Psoas muscle (tissue), 8 donors: ENCODE measurements at regions of chr15 and their contacts with region 1.

Region 1: DNA sequence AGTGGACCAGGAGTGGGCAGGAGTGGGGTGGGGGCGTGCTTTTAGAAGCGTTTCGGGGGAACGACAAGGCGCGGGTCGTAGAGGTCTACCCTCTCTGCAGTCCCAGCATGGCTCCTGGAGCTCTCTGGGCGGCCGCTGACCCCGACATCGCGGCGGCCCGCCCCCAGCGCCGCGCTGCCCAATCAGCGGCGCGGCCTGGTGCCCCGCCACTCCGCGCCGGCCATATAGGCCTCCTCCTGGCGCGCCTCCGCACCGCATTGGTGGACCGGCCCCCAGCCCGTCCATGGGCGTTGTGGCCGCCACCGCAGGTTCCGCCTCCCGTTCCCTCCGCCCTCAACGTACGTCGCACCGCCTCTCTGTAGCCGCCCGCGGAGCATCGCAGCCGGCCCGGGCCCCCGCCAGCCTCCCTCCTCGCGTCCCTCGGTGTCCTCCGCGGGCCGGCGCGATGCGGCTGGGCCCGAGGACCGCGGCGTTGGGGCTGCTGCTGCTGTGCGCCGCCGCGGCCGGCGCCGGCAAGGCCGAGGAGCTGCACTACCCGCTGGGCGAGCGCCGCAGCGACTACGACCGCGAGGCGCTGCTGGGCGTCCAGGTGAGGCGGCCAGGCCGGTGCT is at the start of gene RCN2:
- DNase-seq: peak; percentile 96 to 97
- ATAC-seq: peak; percentile 100
- H3K4me3 ChIP-seq: peak within 1 kb of the TSS; percentile 77
- H3K27ac ChIP-seq: peak within 1 kb of the TSS; percentile 81
- H3K4me1 ChIP-seq: peaks cover 12% of the 10 kb centered on the region
- H3K27me3 ChIP-seq: no peaks in the 10 kb centered on the region
- CTCF ChIP-seq: peak; percentile 4
- total RNA-seq, gene RCN2: 16.6 to 28.8 (median 24.7) TPM

Region 2: DNA sequence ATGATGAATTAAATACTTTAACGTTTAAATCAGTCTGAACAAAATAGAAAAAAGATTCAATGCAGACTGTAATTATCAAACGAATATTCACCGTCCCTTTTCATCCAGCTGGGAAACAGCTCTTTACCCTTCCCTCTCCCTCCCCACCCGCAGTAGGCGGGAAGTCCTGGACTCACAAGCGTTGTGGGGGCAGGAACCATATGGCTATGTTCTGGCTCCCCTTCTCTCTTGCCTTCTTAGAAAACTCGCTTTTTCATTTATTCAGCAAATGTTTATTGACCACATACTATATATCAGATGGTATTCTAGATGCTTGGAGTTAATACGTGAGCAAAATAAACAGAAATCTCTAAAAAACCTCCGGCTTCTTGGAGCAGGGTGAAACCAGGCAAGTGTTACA is 25.6 kb before region 1 on chr15:
- intact Hi-C with region 1: loop called in 1 of 2 experiments (anchors 2 kb)
- DNase-seq: no peak
- ATAC-seq: no peak
- H3K4me3 ChIP-seq: peak overlapping the region; percentile 80
- H3K27ac ChIP-seq: peak overlapping the region; percentile 86
- H3K4me1 ChIP-seq: peaks cover 23% of the 10 kb centered on the region
- H3K27me3 ChIP-seq: no peaks in the 10 kb centered on the region
- CTCF ChIP-seq: no peak

Region 3: DNA sequence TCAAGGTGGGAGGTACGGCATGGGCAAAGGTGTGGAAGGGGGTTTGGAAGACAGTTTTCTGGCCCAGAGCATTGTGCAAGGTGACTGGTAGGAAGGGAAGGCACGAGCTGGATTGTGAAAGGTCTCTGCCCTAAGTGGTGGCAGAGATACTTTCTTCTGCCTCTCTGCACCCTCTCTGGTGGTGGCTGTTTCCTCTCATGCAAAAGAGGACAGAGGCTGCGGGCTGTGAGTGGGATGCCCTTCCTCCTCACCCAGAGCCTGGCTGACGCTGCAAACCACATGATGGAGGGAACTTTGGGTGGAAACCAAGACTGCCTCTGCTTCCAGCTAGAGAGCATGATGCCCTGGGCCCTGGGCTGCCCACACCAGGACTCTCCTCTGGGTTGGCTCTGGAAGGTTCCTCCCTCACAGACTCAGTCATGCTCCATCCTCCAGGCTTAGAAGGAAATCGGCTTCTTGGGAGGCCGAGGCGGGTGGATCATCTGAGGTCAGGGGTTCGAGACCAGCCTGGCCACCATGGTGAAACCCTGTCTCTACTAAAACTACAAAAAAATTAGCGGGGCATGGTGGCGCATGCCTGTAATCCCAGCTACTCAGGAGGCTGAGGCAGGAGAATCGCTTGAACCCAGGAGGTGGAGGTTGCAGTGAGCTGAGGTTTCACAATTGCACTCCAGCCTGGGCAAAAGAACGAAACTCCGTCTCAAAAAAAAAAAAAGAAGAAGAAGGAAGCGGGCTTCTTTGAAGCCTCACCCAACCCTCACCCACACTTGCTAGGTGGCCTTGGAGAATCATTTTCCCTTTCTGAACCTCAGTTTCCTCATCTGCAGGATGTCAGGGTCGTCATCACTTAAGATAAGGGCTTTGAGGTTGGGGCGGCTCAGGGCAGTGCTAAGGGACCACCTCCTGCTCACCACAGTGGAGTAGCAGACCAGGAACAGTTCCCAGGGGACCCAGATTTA is 71.7 kb after region 1 on chr15:
- intact Hi-C with region 1: no loop called
- DNase-seq: peak; percentile 47 to 69
- ATAC-seq: peak; percentile 23 to 35 (median 35)
- H3K4me3 ChIP-seq: no peak overlapping the region
- H3K27ac ChIP-seq: no peak overlapping the region
- H3K4me1 ChIP-seq: no peaks in the 10 kb centered on the region
- H3K27me3 ChIP-seq: no peaks in the 10 kb centered on the region
- CTCF ChIP-seq: no peak

Region 4: DNA sequence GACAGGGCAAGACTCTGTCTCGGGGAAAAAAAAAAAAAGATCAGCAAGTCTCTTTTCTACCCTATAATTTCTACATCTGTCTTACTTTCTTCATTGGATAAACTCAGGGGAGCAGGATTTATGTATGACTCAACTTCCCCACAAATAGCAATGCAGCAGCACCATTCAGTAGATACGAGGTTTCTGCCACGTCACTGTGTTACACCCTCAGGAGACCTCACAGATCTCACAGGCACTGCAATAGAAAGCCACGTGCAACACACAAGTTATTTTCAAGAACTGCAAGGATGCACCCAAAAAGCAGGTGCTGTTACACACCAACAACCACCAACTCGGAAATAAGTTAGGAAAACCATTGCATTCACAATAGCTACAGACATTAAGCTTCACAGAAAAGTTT is 109.2 kb after region 1 on chr15:
- intact Hi-C with region 1: no loop called
- DNase-seq: no peak
- ATAC-seq: peak in 1 of 4 donors; percentile 37
- H3K4me3 ChIP-seq: no peak overlapping the region
- H3K27ac ChIP-seq: peak overlapping the region; percentile 5
- H3K4me1 ChIP-seq: peaks cover 21% of the 10 kb centered on the region
- H3K27me3 ChIP-seq: no peaks in the 10 kb centered on the region
- CTCF ChIP-seq: no peak

Region 5: DNA sequence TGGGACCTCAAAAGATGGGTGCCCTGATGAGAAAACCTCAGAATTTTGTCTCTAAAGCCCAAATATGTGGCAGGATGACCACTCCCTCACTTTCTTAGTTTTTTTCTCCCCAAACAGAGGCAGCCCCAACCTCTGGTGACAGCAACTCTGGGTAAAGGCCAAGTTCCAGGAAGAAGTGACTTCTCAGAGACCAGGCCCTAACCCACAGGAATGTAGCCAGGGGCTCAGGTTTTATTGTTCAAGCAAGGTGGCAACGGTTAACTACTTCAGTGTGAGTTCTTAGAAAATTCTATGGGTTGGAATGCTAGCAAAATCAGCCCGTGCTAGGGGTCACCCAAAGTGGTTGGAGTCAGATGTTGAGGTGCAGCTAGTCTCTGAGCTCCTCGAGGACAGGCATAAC is 1327.7 kb after region 1 on chr15:
- intact Hi-C with region 1: loop called in 1 of 2 experiments (anchors 5 kb)
- DNase-seq: no peak
- ATAC-seq: no peak
- H3K4me3 ChIP-seq: no peak overlapping the region
- H3K27ac ChIP-seq: no peak overlapping the region
- H3K4me1 ChIP-seq: no peaks in the 10 kb centered on the region
- H3K27me3 ChIP-seq: no peaks in the 10 kb centered on the region
- CTCF ChIP-seq: no peak